ENCODE measurements at regions of chr6 and their contacts with region 1.

Region 1: GRCh38 chr6:151014404-151015100 is 149.1 kb downstream of the MTHFD1L start:
- DNase-seq: peak; percentile 12 to 74 (median 57)
- ATAC-seq: peak; percentile 77
- H3K4me3 ChIP-seq: no peak overlapping the region
- H3K4me3 Mint-ChIP-seq: peak overlapping the region; percentile 27
- H3K27ac ChIP-seq: no peak overlapping the region
- H3K27ac Mint-ChIP-seq: no peak overlapping the region
- H3K4me1 ChIP-seq: no peaks in the 10 kb centered on the region
- H3K4me1 Mint-ChIP-seq: peaks cover 3% of the 10 kb centered on the region
- H3K27me3 ChIP-seq: no peaks in the 10 kb centered on the region
- H3K27me3 Mint-ChIP-seq: no peaks in the 10 kb centered on the region
- CTCF ChIP-seq: peak; percentile 94

Region 2: DNA sequence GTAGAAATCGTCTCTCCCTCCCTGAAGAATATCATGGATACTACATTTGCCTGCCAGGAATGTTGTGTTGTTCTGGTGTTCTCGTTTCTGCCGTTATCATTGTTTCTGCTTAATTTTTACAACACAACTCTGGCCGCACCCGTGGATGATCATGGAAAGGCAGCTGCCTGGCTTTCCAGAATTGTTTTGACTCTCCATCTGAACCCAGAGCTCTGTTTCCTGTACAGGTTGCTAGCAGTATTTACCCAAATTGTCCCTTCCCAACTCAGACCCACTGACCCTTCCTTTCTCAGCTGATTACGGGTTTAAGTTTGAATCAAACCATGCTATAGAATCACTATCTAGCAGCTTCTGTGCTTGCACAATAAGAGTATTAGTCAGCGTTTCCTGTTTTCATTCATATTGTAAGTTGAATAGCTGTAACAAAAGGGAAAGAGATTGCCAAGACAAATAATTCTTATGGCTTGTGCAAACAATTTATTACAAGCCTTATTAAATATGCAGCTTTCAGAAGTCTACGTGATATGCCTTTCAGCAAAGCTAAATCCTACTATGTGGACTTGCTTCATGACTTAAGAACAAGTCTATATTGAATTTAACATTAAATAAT is 10.0 kb before region 1 on chr6:
- CTCF ChIA-PET with region 1: interaction called, 30 read pairs
- POLR2A ChIA-PET with region 1: no interaction called
- intact Hi-C with region 1: no loop called
- DNase-seq: peak in 1 of 9 experiments; percentile 8
- ATAC-seq: no peak
- H3K4me3 ChIP-seq: no peak overlapping the region
- H3K4me3 Mint-ChIP-seq: no peak overlapping the region
- H3K27ac ChIP-seq: no peak overlapping the region
- H3K27ac Mint-ChIP-seq: no peak overlapping the region
- H3K4me1 ChIP-seq: no peaks in the 10 kb centered on the region
- H3K4me1 Mint-ChIP-seq: peaks cover 24% of the 10 kb centered on the region
- H3K27me3 ChIP-seq: no peaks in the 10 kb centered on the region
- H3K27me3 Mint-ChIP-seq: no peaks in the 10 kb centered on the region
- CTCF ChIP-seq: no peak

Region 3: GRCh38 chr6:151027772-151028487 is 13.4 kb after region 1 on chr6:
- CTCF ChIA-PET with region 1: interaction called, 29 read pairs
- POLR2A ChIA-PET with region 1: no interaction called
- intact Hi-C with region 1: no loop called
- DNase-seq: no peak
- ATAC-seq: no peak
- H3K4me3 ChIP-seq: no peak overlapping the region
- H3K4me3 Mint-ChIP-seq: no peak overlapping the region
- H3K27ac ChIP-seq: no peak overlapping the region
- H3K27ac Mint-ChIP-seq: no peak overlapping the region
- H3K4me1 ChIP-seq: no peaks in the 10 kb centered on the region
- H3K4me1 Mint-ChIP-seq: no peaks in the 10 kb centered on the region
- H3K27me3 ChIP-seq: no peaks in the 10 kb centered on the region
- H3K27me3 Mint-ChIP-seq: no peaks in the 10 kb centered on the region
- CTCF ChIP-seq: no peak

Region 4: GRCh38 chr6:151335930-151336329 is 321.4 kb after region 1 on chr6:
- CTCF ChIA-PET with region 1: interaction called, 35 read pairs
- POLR2A ChIA-PET with region 1: interaction called, 3 read pairs
- intact Hi-C with region 1: loop called in 1 of 2 experiments (anchors 1 kb)
- DNase-seq: no peak
- ATAC-seq: no peak
- H3K4me3 ChIP-seq: no peak overlapping the region
- H3K4me3 Mint-ChIP-seq: no peak overlapping the region
- H3K27ac ChIP-seq: no peak overlapping the region
- H3K27ac Mint-ChIP-seq: no peak overlapping the region
- H3K4me1 ChIP-seq: no peaks in the 10 kb centered on the region
- H3K4me1 Mint-ChIP-seq: peaks cover 4% of the 10 kb centered on the region
- H3K27me3 ChIP-seq: no peaks in the 10 kb centered on the region
- H3K27me3 Mint-ChIP-seq: peaks cover 2% of the 10 kb centered on the region
- CTCF ChIP-seq: no peak

Measured in CD8-positive, alpha-beta T cell (primary cell).